Endothelial cell of umbilical vein (primary cell): ENCODE measurements at regions of chr4 and their contacts with region 1.

Region 1: DNA sequence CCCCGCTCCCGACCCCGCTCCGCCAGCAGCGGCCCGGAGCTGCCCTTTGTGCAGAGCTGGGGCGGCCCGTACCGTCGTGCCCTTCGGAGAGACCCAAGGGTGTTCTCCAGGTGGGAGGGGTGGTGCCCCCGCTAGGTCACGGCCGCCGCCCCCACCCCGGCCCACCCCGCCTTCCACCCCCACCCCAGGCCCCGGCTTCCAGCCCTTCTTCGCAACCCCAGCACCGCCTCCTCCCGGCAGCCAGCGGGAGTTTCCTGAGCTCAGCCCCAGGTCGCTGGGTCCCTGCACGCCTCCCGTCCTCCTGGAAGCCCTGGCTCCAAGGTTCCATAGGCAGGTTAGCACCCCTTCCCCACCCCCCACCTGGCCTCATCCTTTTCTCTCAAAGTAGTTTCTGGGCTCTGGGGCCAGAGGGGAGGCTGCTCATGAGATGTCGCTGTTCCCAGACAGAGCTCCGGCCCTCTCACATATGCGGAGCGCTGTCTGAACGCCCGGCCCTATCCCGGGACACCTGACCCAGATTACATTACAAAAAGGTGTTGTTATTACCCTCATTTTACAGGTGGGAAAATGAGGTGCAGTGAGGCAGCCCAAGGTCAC is 25.2 kb upstream of the FGFR3 start:
- DNase-seq: peak; percentile 31
- H3K4me3 ChIP-seq: peak overlapping the region in 1 of 3 experiments; percentile 33
- H3K27ac ChIP-seq: no peak overlapping the region
- H3K4me1 ChIP-seq: peaks cover 5% of the 10 kb centered on the region
- H3K27me3 ChIP-seq: no peaks in the 10 kb centered on the region
- CTCF ChIP-seq: peak; percentile 17 to 59
- POLR2A ChIP-seq: no peak

Region 2: DNA sequence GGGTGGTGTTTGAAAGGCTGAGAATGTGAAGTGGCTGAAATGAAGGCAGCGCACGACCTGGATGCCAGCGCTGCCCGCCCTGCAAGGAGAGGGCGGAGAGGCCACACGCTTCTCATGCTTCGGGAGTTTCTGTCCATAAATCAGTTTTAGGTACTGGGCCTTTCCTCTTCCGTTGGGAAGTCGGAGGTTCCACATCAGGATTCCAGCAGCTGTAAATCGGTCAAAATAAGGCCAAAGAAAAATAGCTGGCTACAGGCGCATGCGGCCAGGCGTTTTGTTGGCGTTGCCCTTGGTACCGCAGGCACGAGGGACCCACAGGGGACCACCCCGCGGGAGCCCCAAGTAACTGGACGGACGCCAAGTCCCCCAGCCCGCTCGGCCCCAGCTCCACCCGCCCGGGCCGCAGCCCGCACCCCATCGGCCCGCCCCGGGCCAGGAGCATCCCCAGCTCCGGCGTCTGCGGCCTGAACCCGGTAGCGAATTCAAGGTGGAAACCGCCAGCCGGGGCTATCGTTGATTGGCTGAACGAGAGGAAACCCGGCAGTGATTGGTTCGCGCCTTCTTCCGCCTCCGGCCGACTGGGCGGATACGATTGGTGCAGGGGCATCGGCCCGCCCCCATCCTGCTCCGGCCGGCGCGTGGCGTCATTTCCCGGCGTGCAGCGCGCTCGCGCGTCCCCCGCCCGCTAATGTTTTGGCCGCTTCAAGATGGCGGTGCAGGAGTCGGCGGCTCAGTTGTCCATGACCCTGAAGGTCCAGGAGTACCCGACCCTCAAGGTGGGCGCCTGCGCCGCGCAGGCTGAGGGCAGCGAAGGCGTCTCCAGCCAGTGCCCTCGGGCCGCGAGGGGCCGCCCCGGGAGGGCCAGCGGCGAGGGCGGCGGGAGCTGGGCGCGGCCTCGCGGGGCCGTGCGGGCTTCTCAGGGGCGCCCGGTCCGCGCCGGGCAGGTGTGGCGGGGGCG is 478.4 kb before region 1 on chr4 and contains the start of gene MAEA:
- CTCF ChIA-PET with region 1: no interaction called
- POLR2A ChIA-PET with region 1: no interaction called
- dilution Hi-C with region 1: no loop called
- intact Hi-C with region 1: no loop called
- DNase-seq: peak; percentile 98
- H3K4me3 ChIP-seq: peak within 1 kb of the TSS; percentile 84 to 87 (median 86)
- H3K27ac ChIP-seq: peak within 1 kb of the TSS; percentile 67
- H3K4me1 ChIP-seq: peaks cover 16% of the 10 kb centered on the region
- H3K27me3 ChIP-seq: no peaks in the 10 kb centered on the region
- CTCF ChIP-seq: no peak
- POLR2A ChIP-seq: peak; percentile 96
- total RNA-seq, gene MAEA: 66.0 and 66.6 TPM in 2 replicates

Region 3: GRCh38 chr4:1746265-1746691 is 21.6 kb before region 1 on chr4:
- CTCF ChIA-PET with region 1: interaction called, 33 read pairs
- POLR2A ChIA-PET with region 1: no interaction called
- dilution Hi-C with region 1: no loop called
- intact Hi-C with region 1: no loop called
- DNase-seq: peak; percentile 75
- H3K4me3 ChIP-seq: no peak overlapping the region
- H3K27ac ChIP-seq: no peak overlapping the region
- H3K4me1 ChIP-seq: peaks cover 4% of the 10 kb centered on the region
- H3K27me3 ChIP-seq: no peaks in the 10 kb centered on the region
- CTCF ChIP-seq: peak; percentile 93 to 96
- POLR2A ChIP-seq: no peak

Region 4: DNA sequence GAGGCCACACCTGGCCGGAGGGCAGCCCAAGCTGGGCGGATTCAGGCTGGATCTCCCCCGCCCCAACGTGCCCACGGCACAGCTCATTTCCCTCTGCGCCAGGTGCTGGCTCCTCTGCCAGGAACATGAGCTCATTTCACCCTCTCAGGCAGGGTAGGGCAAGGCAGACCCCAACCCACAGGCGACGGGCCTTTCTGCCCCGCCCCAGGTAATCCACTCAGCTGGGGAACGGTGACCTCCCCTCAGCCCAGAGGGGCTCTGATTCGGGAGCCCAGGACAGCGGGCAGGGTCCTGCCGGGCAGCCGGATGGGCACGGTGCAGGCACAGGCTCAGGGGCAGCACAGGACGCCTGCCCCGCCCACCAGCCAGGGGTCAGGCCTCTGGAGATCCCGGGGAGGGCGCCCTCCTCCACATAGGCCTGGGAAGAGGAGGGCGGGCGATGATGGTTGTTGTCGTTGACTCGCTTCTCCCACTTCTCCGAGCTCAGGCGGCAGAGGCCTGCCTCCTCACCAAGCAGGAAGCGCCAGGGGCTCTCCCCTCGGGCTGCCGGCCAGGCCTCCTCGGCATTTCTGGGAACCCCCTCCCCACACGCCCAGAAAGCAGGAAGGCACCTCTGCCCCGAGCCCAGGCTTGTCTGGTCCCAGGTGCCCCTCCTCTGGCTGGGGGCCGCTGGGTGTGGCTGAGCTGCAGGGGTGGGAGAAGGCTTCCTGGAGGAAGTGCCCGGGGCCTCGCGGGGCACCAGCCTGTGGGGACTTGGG is 15.4 kb before region 1 on chr4:
- CTCF ChIA-PET with region 1: interaction called, 33 read pairs
- POLR2A ChIA-PET with region 1: no interaction called
- dilution Hi-C with region 1: no loop called
- intact Hi-C with region 1: no loop called
- DNase-seq: peak; percentile 16
- H3K4me3 ChIP-seq: no peak overlapping the region
- H3K27ac ChIP-seq: no peak overlapping the region
- H3K4me1 ChIP-seq: peaks cover 9% of the 10 kb centered on the region
- H3K27me3 ChIP-seq: no peaks in the 10 kb centered on the region
- CTCF ChIP-seq: no peak
- POLR2A ChIP-seq: no peak

Region 5: DNA sequence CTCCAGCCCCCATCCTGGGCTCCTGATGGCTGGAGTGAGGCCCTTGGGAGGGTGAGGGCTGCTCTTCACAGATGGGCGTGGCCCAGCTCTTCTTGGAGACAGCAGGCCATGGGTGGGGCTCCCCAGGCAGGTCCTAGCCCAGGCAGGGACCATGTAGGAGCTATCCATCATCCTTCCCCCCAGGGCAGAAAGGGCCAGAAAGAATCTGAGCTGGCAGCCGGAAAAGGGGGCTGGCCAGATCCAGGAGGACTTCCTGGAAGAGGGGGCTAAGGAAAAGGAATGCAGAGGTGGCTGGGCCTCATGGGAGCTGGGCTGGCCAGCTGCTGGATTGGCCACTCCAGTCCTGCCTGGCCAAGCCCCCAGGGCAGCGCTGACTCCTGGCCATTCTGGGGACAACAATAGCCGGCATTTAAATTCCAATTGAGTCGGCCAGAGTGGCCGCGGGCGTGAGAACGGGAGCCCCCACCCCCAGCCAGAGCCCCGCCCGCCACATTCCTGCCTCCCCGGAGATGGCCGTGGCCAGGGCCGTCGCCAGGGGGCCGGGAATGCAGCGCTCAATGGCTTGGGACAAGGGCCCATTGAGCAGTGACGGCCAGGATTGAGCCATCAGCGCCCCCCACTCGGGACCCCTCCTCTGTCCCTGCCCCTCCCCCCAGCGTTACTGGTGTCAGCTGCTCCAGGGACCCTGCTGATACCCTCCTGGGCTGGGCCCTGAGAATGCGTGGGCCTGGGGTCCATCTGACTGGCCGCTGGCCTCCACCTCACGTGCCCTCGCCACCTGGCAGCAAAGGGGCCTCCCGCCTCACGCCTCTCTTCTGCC is 10.2 kb after region 1 on chr4:
- CTCF ChIA-PET with region 1: interaction called, 27 read pairs
- POLR2A ChIA-PET with region 1: interaction called, 3 read pairs
- dilution Hi-C with region 1: no loop called
- intact Hi-C with region 1: no loop called
- DNase-seq: no peak
- H3K4me3 ChIP-seq: no peak overlapping the region
- H3K27ac ChIP-seq: no peak overlapping the region
- H3K4me1 ChIP-seq: no peaks in the 10 kb centered on the region
- H3K27me3 ChIP-seq: no peaks in the 10 kb centered on the region
- CTCF ChIP-seq: peak in 1 of 2 donors; percentile 22
- POLR2A ChIP-seq: no peak

Region 6: GRCh38 chr4:1784789-1785591 is 17.1 kb after region 1 on chr4:
- CTCF ChIA-PET with region 1: interaction called, 27 read pairs
- POLR2A ChIA-PET with region 1: no interaction called
- dilution Hi-C with region 1: no loop called
- intact Hi-C with region 1: no loop called
- DNase-seq: peak; percentile 18
- H3K4me3 ChIP-seq: no peak overlapping the region
- H3K27ac ChIP-seq: no peak overlapping the region
- H3K4me1 ChIP-seq: no peaks in the 10 kb centered on the region
- H3K27me3 ChIP-seq: no peaks in the 10 kb centered on the region
- CTCF ChIP-seq: no peak
- POLR2A ChIP-seq: no peak

Region 7: DNA sequence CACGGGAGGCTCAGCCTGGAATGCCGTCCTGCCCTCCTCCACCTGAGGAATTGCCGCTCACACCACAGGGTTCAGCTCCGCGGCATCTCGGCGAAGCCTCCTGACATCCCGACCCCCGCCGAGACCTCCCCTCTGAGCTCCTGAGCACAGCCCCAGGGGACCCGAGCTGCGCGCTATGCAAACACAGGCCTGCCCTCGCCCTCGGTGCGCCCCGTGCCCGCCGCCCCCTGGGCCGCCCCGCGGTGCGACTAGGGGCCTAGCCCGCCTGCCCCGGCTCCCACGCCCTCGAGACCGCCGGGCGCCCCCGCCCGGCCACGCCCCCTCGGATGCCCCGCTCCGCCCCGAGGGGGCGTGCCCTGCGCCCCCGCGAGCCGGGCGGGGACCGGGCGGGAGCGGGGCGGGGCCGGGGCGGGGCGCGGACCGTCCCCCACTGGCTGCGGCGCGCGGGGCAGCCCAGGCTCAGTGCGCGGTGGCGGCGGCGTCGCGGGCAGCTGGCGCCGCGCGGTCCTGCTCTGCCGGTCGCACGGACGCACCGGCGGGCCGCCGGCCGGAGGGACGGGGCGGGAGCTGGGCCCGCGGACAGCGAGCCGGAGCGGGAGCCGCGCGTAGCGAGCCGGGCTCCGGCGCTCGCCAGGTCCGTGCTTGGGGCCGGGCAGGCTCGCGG is 25.1 kb after region 1 on chr4 and contains the start of gene FGFR3:
- CTCF ChIA-PET with region 1: interaction called, 22 read pairs
- POLR2A ChIA-PET with region 1: no interaction called
- dilution Hi-C with region 1: no loop called
- intact Hi-C with region 1: no loop called
- DNase-seq: no peak
- H3K4me3 ChIP-seq: peak within 1 kb of the TSS in 2 of 3 experiments; percentile 22 to 39
- H3K27ac ChIP-seq: no peak within 1 kb of the TSS
- H3K4me1 ChIP-seq: no peaks in the 10 kb centered on the region
- H3K27me3 ChIP-seq: peaks cover 16 to 24% of the 10 kb centered on the region in 2 experiments
- CTCF ChIP-seq: no peak
- POLR2A ChIP-seq: no peak
- total RNA-seq, gene FGFR3: 1.2 TPM in 2 replicates

Region 8: DNA sequence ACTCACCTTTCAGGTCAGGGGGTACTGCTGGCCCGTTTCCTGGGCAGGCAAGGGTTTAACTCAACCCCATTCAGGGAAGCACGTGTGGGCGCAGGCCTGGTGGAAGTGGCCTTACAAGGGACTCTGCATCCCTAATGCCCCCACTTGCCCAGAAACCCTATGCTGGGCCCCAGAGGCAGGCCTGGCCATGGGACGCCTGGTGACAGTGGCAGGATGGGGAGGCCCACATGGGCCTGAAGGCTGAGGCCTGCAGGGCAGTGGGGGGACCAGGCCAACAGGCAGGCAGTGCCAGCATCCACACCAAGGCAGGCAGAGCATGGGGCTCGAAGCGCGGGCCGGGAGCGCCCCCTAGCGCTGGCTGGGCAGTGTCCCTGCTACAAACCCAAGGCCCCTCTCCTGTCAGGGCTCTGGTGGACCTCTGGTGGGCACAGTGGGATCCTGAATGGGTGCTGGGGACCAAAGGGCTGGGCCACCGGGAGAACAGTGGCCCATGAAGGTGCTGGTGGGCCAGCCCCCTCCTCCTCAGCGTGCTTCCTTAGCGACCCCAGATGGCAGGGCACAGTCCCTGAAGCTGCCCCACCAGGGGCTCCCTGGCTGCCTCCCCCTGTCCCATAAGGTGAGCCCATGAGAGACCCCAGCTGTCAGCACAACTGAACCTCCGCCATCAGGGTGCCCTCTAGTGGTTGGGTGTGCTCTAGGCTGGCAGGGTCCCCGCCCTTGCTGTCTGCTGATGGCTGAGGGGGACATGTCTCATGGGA is 42.1 kb after region 1 on chr4:
- CTCF ChIA-PET with region 1: interaction called, 13 read pairs
- POLR2A ChIA-PET with region 1: interaction called, 4 read pairs
- dilution Hi-C with region 1: no loop called
- intact Hi-C with region 1: no loop called
- DNase-seq: peak; percentile 66
- H3K4me3 ChIP-seq: no peak overlapping the region
- H3K27ac ChIP-seq: no peak overlapping the region
- H3K4me1 ChIP-seq: no peaks in the 10 kb centered on the region
- H3K27me3 ChIP-seq: no peaks in the 10 kb centered on the region
- CTCF ChIP-seq: peak; percentile 97 to 99
- POLR2A ChIP-seq: no peak